IMR-90 (cell line): ENCODE measurements at regions of chr12 and their contacts with region 1.

Region 1: DNA sequence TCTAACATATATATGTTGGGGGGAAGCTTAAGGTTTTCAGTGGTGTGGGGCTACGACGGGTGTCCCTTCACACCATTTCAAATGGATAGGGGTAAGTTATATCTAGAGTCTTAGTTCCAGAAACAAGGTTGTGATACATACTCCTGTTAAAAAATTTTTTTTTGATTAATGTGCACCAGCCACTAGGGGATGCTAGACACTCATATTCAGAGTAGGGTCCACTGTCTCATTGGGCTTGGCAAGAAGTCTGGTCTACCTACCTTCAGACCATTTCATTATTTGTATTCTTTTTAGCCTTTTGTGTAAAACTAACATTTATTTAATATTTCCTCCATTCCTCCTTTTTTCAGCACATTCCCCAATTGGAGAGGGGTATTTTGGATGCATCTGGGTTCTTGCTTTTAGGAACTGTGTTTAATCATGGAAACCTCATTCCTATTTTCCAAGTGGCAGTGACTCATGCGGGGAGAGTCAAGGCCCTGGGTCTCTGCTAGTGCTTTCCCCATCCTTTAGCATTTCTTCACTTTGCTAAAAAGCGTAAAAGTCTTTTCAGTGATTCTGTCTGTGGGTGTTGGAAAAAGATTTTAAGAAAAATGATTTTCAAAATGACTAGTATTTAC is 33.4 kb downstream of the ANO4 start:
- DNase-seq: peak; percentile 54
- ATAC-seq: peak; percentile 38; the same call in 1 of the 2 replicates
- H3K4me3 ChIP-seq: no peak overlapping the region
- H3K27ac ChIP-seq: no peak overlapping the region
- H3K4me1 ChIP-seq: no peaks in the 10 kb centered on the region
- H3K27me3 ChIP-seq: no peaks in the 10 kb centered on the region
- CTCF ChIP-seq: peak; percentile 78
- POLR2A ChIP-seq: no peak
- RAD21 ChIP-seq: peak; percentile 88

Region 2: GRCh38 chr12:100987552-100988521 is 159.8 kb after region 1 on chr12:
- CTCF ChIA-PET with region 1: no interaction called
- POLR2A ChIA-PET with region 1: no interaction called
- dilution Hi-C with region 1: no loop called
- in situ Hi-C with region 1: no loop called
- intact Hi-C with region 1: loop called (anchors 5 kb)
- DNase-seq: peak; percentile 70
- ATAC-seq: peak; percentile 77
- H3K4me3 ChIP-seq: no peak overlapping the region
- H3K27ac ChIP-seq: peak overlapping the region; percentile 76; the same call in 1 of the 2 replicates
- H3K4me1 ChIP-seq: peaks cover 11% of the 10 kb centered on the region
- H3K27me3 ChIP-seq: no peaks in the 10 kb centered on the region
- CTCF ChIP-seq: peak; percentile 55
- POLR2A ChIP-seq: no peak
- RAD21 ChIP-seq: peak; percentile 64

Region 3: DNA sequence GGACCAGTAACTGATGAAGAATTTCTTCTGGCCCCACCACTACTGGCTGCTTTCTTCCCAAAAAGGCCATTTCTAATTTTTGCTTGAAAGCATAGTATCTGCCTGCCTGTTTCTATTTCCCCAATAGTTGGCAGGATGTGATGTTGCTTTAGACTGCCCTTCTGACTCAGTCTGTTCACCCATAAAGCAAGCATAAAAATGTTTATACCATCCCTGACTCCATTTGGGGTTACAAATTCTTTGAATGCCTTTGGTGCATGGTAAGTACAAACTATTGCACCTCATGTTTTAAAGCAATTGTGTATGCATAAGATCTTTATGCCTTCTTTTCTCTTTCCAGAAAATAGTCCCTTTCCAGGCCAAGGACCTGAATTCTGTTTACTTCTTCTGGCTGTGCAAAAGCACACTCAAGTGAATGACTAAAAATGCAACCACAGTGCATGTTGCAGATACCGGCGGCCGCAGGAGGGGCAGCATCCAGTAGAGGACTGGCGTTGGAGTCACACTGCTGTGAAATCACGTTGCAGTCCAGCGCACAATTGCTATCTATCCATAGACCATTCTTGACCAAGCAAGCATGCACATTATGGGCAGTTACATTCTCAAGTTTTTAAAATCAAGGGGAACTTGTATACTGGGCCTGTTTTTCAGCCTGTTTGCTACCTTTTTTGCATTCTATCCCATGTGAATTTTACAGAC is 299.7 kb after region 1 on chr12:
- CTCF ChIA-PET with region 1: no interaction called
- POLR2A ChIA-PET with region 1: no interaction called
- dilution Hi-C with region 1: no loop called
- in situ Hi-C with region 1: no loop called
- intact Hi-C with region 1: loop called (anchors 10 kb)
- DNase-seq: peak; percentile 80
- ATAC-seq: peak; percentile 92
- H3K4me3 ChIP-seq: no peak overlapping the region
- H3K27ac ChIP-seq: peak overlapping the region; percentile 84
- H3K4me1 ChIP-seq: peaks cover 13% of the 10 kb centered on the region
- H3K27me3 ChIP-seq: no peaks in the 10 kb centered on the region
- CTCF ChIP-seq: no peak
- POLR2A ChIP-seq: no peak
- RAD21 ChIP-seq: no peak

Region 4: DNA sequence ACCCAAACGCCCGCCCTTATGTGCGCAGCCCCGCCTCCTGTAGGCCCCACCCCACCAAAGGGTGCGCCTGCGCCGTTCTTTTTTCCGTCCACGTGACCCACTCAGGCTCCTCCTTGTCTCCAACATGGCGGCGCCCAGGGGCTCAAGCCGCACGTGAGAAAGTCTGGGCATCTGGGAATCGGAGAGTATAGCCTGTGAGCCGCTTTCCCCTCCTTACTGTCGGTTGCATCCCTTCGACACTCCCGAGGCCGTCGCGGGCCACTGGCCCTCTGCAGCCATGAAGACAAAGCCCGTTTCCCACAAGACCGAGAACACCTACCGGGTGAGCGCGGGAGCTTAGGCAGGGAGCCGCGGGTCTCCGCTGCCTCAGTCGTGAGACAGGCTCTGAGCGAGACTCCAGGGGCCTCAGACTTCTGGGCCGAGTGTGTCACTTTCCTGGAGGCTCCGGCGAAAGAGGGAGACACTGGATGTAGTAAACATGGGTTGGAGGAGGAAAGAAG is 452.0 kb after region 1 on chr12 and contains the start of gene UTP20:
- CTCF ChIA-PET with region 1: no interaction called
- POLR2A ChIA-PET with region 1: no interaction called
- dilution Hi-C with region 1: no loop called
- in situ Hi-C with region 1: no loop called
- intact Hi-C with region 1: loop called (anchors 5 kb)
- DNase-seq: peak; percentile 82
- ATAC-seq: peak; percentile 100
- H3K4me3 ChIP-seq: peak within 1 kb of the TSS; percentile 78
- H3K27ac ChIP-seq: peak within 1 kb of the TSS; percentile 50; the same call in 1 of the 2 replicates
- H3K4me1 ChIP-seq: no peaks in the 10 kb centered on the region
- H3K27me3 ChIP-seq: peaks cover 4% of the 10 kb centered on the region
- CTCF ChIP-seq: no peak
- POLR2A ChIP-seq: peak; percentile 65
- RAD21 ChIP-seq: no peak
- total RNA-seq, gene UTP20: 22.0 and 29.7 TPM in 2 replicates

Region 5: GRCh38 chr12:101323255-101323654 is 495.2 kb after region 1 on chr12:
- CTCF ChIA-PET with region 1: no interaction called
- POLR2A ChIA-PET with region 1: no interaction called
- dilution Hi-C with region 1: no loop called
- in situ Hi-C with region 1: no loop called
- intact Hi-C with region 1: loop called (anchors 10 kb)
- DNase-seq: no peak
- ATAC-seq: no peak
- H3K4me3 ChIP-seq: no peak overlapping the region
- H3K27ac ChIP-seq: no peak overlapping the region
- H3K4me1 ChIP-seq: no peaks in the 10 kb centered on the region
- H3K27me3 ChIP-seq: no peaks in the 10 kb centered on the region
- CTCF ChIP-seq: no peak
- POLR2A ChIP-seq: no peak
- RAD21 ChIP-seq: no peak